Posterior vena cava (tissue), 2 donors: ENCODE measurements at regions of chr1 and their contacts with region 1.

Region 1: GRCh38 chr1:1815606-1816281 is 37.5 kb upstream of the NADK start:
- DNase-seq: no peak

Region 2: DNA sequence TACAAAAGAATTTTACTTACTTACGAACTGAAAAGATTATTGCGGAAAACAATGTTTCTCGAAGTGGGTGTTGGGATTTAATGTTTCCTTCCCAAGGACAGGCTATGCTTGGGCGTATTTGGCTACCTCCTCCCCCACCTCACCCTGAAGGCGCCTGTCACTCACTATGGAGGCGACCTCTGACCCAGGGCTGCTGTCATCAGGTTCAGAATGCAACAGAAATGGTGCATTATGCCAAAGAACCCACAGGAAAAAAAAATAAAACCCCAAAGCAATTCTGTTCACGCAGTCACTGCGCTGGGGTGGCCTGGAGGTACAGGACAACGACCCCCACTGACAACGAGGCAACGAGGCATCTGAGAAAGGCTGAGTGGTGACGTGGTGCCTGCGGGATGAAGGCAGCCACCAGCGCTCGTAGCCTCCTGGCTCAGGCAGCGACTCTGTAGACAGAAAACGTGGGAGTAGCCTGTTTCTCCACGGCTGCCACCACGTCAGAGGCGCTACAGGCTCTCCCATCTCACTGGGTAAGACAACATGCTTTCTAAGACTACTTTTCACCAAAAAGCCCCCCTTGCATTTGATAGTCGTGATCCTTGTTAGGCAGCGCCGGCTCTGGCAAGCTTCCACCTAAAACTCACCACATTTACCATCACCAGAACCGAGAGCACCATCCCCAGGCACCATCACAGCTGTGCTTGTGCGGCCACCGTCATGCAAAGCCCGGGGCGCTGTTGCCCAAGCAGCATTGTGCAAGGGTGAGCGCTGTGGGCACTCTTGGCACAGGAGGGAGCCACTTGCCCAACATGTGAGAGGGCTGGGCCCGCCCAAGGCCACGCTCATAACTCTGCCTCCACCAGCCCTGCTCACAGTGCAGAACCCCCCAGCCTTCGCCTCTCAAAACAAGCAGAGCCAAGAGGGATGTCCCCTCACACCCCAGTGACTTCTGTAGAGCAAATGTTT is 51.8 kb before region 1 on chr1:
- intact Hi-C with region 1: no loop called
- DNase-seq: peak; percentile 95

Region 3: DNA sequence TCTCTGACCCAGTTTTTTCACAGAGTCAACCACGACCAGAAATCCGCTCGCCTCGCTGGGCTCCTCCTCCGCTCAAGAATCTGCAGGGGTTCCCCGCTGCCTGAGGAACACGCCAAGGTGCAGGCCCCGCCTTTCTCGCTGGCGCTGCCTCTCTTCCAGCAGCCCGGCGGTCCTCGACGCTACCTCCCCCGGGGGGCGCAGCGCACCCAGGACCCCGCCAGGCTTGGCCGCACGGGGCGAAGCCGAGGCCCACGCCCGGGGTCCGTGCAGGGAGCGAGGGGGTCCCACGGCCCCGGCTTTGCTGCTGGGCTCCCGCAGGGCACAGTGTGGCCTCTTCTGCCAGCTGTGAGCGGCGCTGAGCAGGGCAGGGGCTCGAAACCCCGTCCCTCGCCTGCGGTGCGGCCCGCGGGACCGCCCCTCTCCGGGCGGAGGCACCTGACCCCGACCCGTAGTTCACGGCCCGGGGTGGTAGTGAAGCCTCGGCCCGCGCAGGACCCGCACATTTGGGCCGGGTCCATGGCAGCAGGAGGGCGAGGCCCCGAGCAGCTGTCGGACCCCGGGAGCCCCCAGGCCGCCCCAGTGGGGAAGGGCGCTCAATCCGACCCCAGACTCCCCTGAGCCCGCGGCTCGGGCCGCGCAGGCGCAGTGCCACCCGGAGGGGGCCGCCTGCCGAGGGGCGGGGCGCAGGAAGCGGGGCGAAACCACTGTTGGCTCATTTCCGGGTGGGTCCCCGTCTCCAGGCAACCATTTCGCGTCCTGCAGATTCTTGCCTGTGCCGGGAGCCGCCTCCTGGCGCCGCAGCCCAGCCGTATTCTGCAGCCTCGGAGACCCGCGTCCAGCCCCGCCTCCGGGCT is 827.0 kb after region 1 on chr1:
- intact Hi-C with region 1: loop called in 1 of 2 experiments (anchors 10 kb)
- DNase-seq: peak; percentile 97